Stomach (tissue), 19 donors: ENCODE measurements at regions of chr18 and their contacts with region 1.

Region 1: DNA sequence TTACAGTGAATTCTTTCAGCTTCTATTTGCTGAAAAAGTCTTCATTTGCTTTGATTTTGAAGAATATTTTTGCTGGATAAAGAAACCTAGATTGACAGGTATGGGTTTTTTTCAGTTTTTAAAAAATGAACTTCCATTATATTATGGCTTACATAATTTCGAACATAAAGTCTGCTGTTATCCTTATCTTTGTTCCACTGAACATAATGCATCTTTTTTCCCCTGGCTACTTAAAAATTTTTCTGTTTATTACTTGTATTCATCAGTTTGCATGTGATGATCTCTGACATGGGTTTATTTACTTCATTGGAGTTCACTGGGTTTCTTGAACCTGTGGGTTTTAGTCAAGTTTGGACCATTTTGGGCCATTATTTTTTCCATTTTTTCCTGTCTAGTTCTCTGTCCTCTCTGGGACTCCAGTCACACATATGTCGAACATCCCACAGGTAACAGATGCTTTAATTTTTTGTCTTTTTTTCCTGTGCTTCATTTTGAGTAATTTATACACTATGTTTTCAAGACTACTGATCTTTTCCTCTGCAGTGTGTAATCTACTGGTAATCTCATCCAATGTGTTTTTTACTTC is 33.1 kb downstream of the SEC11C start:
- DNase-seq: no peak
- H3K4me3 ChIP-seq: no peak overlapping the region
- H3K27ac ChIP-seq: no peak overlapping the region
- H3K4me1 ChIP-seq: no peaks in the 10 kb centered on the region
- H3K27me3 ChIP-seq: no peaks in the 10 kb centered on the region
- CTCF ChIP-seq: no peak
- EP300 ChIP-seq: no peak
- POLR2A ChIP-seq: no peak

Region 2: GRCh38 chr18:58091099-58091611 is 1081.6 kb before region 1 on chr18:
- intact Hi-C with region 1: no loop called
- DNase-seq: peak in 1 of 2 donors; percentile 52
- H3K4me3 ChIP-seq: no peak overlapping the region
- H3K27ac ChIP-seq: peak overlapping the region in 3 of 5 donors; percentile 30 to 54 (median 40)
- H3K4me1 ChIP-seq: peaks cover 11 to 45% (median 32%) of the 10 kb centered on the region in 4 donors
- H3K27me3 ChIP-seq: no peaks in the 10 kb centered on the region
- CTCF ChIP-seq: no peak
- EP300 ChIP-seq: no peak
- POLR2A ChIP-seq: no peak

Region 3: GRCh38 chr18:59114160-59114559 is 58.6 kb before region 1 on chr18:
- intact Hi-C with region 1: loop called (anchors 10 kb)
- DNase-seq: no peak
- H3K4me3 ChIP-seq: no peak overlapping the region
- H3K27ac ChIP-seq: no peak overlapping the region
- H3K4me1 ChIP-seq: no peaks in the 10 kb centered on the region
- H3K27me3 ChIP-seq: peaks cover 0 to 40% (median 0%) of the 10 kb centered on the region in 3 donors
- CTCF ChIP-seq: no peak
- EP300 ChIP-seq: no peak
- POLR2A ChIP-seq: no peak

Region 4: GRCh38 chr18:59300676-59301285 is 128.0 kb after region 1 on chr18:
- intact Hi-C with region 1: no loop called
- DNase-seq: no peak
- H3K4me3 ChIP-seq: no peak overlapping the region
- H3K27ac ChIP-seq: no peak overlapping the region
- H3K4me1 ChIP-seq: no peaks in the 10 kb centered on the region
- H3K27me3 ChIP-seq: peaks cover 0 to 32% (median 0%) of the 10 kb centered on the region in 3 donors
- CTCF ChIP-seq: no peak
- EP300 ChIP-seq: no peak
- POLR2A ChIP-seq: no peak